SK-N-SH (cell line): ENCODE measurements at regions of chr18 and their contacts with region 1.

Region 1: GRCh38 chr18:61581578-61582201 is 248.5 kb downstream of the CDH20 start:
- DNase-seq: peak; percentile 88
- H3K4me3 ChIP-seq: peak overlapping the region; percentile 35 to 47; a peak in 3 of 4 replicates
- H3K27ac ChIP-seq: no peak overlapping the region
- H3K4me1 ChIP-seq: peaks cover 0 to 4% of the 10 kb centered on the region in 2 experiments; a peak in 2 of 4 replicates
- H3K27me3 ChIP-seq: no peaks in the 10 kb centered on the region
- CTCF ChIP-seq: peak; percentile 97
- EP300 ChIP-seq: no peak
- RAD21 ChIP-seq: peak; percentile 82

Region 2: GRCh38 chr18:61596296-61596695 is 14.6 kb after region 1 on chr18:
- CTCF ChIA-PET with region 1: interaction called, 34 read pairs
- POLR2A ChIA-PET with region 1: no interaction called
- DNase-seq: no peak
- H3K4me3 ChIP-seq: no peak overlapping the region
- H3K27ac ChIP-seq: peak overlapping the region; percentile 7 to 16; a peak in 2 of 4 replicates
- H3K4me1 ChIP-seq: peaks cover 2 to 16% of the 10 kb centered on the region in 2 experiments; a peak in 2 of 4 replicates
- H3K27me3 ChIP-seq: no peaks in the 10 kb centered on the region
- CTCF ChIP-seq: no peak
- EP300 ChIP-seq: no peak
- RAD21 ChIP-seq: no peak

Region 3: DNA sequence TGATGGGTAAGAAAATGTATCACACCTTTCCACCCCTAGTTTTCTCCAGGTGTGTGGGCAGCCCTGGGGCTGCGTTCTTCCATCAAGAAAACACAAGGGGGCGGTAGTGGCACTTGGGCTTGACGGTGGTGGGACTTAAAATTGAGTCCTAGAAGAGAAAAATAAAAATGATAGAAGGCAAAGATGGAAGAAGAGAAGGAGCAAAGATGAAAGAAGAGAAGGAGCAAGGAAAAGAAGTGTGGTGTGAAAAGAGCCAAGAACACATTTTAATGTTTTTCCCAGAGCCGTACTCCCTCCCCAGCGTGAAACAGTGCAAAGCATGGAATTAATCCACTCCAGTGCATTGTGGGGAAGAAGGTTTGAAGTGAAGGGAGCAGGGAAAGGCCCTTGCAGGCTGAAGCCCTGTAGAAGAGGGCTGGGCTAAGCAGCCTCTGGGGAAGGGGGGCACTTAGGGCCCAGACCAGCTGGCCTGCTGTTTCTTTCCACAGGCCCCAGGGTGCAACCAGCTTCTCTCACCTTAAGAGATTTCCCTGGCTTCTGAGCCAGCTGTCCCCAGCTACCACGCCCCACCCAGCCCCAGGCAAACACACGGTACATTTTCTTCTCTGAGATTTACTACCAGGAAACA is 54.3 kb after region 1 on chr18:
- CTCF ChIA-PET with region 1: interaction called, 11 read pairs
- POLR2A ChIA-PET with region 1: no interaction called
- DNase-seq: peak; percentile 66
- H3K4me3 ChIP-seq: no peak overlapping the region; a peak in 1 of 4 replicates
- H3K27ac ChIP-seq: peak overlapping the region in 1 of 2 experiments; percentile 53; a peak in 2 of 4 replicates
- H3K4me1 ChIP-seq: peaks cover 9 to 11% of the 10 kb centered on the region in 2 experiments; a peak in 2 of 4 replicates
- H3K27me3 ChIP-seq: no peaks in the 10 kb centered on the region
- CTCF ChIP-seq: peak; percentile 95
- EP300 ChIP-seq: 0 out of 4 replicates have a peak, but pooled peaks of 1 of the 2 experiments have one; percentile 4
- RAD21 ChIP-seq: peak; percentile 87

Region 4: GRCh38 chr18:61901323-61901986 is 319.8 kb after region 1 on chr18:
- CTCF ChIA-PET with region 1: interaction called, 11 read pairs
- POLR2A ChIA-PET with region 1: no interaction called
- DNase-seq: peak; percentile 73
- H3K4me3 ChIP-seq: no peak overlapping the region; a peak in 1 of 4 replicates
- H3K27ac ChIP-seq: no peak overlapping the region
- H3K4me1 ChIP-seq: peaks cover 0 to 7% of the 10 kb centered on the region in 2 experiments; a peak in 2 of 4 replicates
- H3K27me3 ChIP-seq: no peaks in the 10 kb centered on the region
- CTCF ChIP-seq: peak; percentile 89
- EP300 ChIP-seq: no peak
- RAD21 ChIP-seq: peak; percentile 82